ENCODE measurements at regions of chr2 and their contacts with region 1.

Region 1: DNA sequence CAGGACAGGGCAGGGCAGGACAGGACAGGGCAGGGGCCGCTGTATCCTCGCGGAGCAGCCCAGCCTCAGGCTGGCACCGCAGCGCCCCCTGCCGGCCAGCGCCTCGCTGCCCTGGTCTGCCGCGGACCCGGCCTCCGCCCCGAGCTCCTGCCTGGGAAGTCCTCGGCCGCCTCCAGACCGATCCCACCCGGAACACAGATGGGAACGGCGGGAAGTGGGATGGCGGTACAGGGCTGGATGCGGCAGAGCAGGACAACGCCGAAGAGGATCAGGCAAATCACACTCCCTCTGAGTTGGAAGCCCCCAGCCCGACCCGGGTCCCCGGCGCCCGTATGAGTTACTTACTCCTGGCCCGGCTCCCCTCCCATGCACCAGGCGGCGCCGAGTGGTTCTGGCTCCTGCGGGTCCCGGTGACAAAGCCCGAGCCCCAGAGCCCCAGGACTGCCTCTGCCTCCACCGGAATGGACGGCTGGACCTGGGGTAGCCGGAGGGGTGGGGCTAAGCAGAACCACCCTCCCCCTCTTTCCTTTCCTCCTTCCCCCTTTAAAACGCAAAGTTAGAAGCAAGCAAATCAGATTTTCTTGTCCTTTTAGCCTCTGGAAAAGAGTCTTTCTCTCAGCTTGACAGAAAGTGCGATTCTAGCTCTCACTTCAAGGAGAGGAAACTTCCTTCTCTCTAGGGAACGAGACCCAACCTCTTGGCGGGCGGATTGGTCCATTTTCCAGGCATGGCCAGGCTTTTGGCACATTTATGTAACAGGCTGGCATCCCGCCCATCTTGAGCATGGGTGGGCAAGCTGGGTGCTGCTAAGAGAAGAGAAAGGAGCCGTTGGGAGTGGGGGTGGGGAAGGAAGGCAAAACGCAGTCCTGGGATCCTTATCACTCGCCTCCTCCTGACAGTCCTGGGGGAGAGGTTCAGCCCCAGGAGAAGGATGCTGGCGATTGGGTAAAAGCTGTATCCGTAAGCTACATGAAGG is at the start of gene TP53I3:
- DNase-seq: peak; percentile 71 to 90
- ATAC-seq: peak; percentile 93 to 95
- H3K4me3 ChIP-seq: peak within 1 kb of the TSS; percentile 50 to 68 (median 62)
- H3K27ac ChIP-seq: peak within 1 kb of the TSS; percentile 67 to 82 (median 74)
- H3K4me1 ChIP-seq: peaks cover 8 to 12% of the 10 kb centered on the region in 2 donors
- H3K27me3 ChIP-seq: no peaks in the 10 kb centered on the region
- CTCF ChIP-seq: peak; percentile 92 to 98 (median 97)
- POLR2A ChIP-seq: peak; percentile 47 to 72
- total RNA-seq, gene TP53I3: 3.3 to 7.6 (median 4.9) TPM

Region 2: GRCh38 chr2:23824777-23825212 is 259.9 kb before region 1 on chr2:
- in situ Hi-C with region 1: loop called (anchors 10 to 25 kb)
- intact Hi-C with region 1: loop called (anchors 2 kb)
- DNase-seq: no peak
- ATAC-seq: peak in 1 of 2 donors; percentile 60
- H3K4me3 ChIP-seq: no peak overlapping the region
- H3K27ac ChIP-seq: no peak overlapping the region
- H3K4me1 ChIP-seq: peaks cover 0 to 5% of the 10 kb centered on the region in 2 donors
- H3K27me3 ChIP-seq: no peaks in the 10 kb centered on the region
- CTCF ChIP-seq: peak; percentile 36 to 67 (median 58)
- POLR2A ChIP-seq: no peak

Region 3: DNA sequence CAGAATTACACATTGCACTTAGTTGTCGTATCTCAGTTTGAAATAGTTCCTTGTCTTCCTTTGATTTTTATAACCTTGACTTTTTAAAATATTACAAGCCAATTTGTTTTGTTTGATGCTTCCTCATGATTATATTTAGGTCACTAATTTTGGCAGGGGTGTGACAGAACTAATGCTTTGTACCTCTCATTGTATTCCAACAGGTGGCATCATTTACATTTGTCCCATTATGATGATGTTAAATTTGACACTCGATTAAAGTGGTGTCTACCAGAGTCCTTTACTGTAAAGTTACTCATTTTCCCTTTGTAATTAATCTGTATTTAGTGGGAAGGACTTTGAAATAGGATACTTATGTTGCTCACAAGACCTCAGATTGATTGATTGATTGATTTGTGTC is 96.3 kb before region 1 on chr2:
- in situ Hi-C with region 1: no loop called
- intact Hi-C with region 1: loop called (anchors 2 kb)
- DNase-seq: no peak
- ATAC-seq: no peak
- H3K4me3 ChIP-seq: no peak overlapping the region
- H3K27ac ChIP-seq: no peak overlapping the region
- H3K4me1 ChIP-seq: no peaks in the 10 kb centered on the region
- H3K27me3 ChIP-seq: no peaks in the 10 kb centered on the region
- CTCF ChIP-seq: peak in 2 of 5 experiments; percentile 19 to 23
- POLR2A ChIP-seq: no peak

Region 4: GRCh38 chr2:24046930-24047702 is 37.6 kb before region 1 on chr2 and contains the start of gene WDCP:
- in situ Hi-C with region 1: no loop called
- intact Hi-C with region 1: loop called (anchors 2 kb)
- DNase-seq: peak; percentile 97
- ATAC-seq: peak; percentile 100
- H3K4me3 ChIP-seq: peak within 1 kb of the TSS; percentile 68 to 98 (median 90)
- H3K27ac ChIP-seq: peak within 1 kb of the TSS; percentile 79 to 85 (median 82)
- H3K4me1 ChIP-seq: peaks cover 19 to 27% of the 10 kb centered on the region in 2 donors
- H3K27me3 ChIP-seq: peaks cover 8 to 21% (median 18%) of the 10 kb centered on the region in 3 donors
- CTCF ChIP-seq: no peak
- POLR2A ChIP-seq: peak; percentile 47 to 80
- total RNA-seq, gene WDCP: 4.8 to 8.4 (median 8.3) TPM

Region 5: DNA sequence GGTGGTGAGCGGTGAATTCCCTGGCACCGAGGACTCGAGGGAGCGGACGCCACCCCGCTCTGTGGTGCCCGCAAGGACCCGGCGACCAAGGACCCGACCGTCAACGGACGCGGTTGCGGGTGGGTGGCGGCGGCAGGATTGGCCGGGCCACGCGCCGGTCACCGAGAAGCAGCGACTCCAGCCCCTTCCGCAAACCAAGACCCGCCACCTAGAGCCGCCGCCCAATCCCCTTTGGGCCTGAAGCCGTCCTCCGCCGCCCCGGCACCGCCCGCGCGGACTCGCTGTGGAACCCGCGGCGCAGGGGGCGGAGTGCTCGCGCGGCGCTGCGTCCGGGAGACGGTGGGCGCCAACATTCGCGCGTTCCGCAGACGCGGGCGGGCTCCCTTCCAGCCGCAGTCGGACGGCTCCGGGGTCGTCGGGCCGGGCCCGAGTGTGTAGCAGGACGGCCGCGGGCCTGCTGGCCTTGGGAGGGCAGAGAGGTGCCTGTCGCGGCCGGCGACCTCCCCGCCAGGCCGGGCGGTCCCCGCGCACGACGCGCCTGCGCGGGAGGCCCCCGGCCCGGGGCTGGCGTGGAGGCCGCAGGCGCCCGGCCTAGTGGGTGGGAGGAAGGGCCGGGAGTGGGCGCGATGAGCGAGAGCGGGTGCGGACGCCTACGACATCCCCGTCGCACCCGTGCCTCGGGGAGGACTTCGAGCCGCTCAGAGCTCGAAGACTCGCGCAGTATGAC is 38.7 kb after region 1 on chr2 and contains the starts of genes FAM228B and PFN4:
- in situ Hi-C with region 1: no loop called
- intact Hi-C with region 1: loop called (anchors 2 kb)
- DNase-seq: peak; percentile 85 to 88
- ATAC-seq: peak; percentile 93
- H3K4me3 ChIP-seq: peak within 1 kb of the TSS; percentile 80 to 94 (median 84)
- H3K27ac ChIP-seq: peak within 1 kb of the TSS; percentile 86 to 93 (median 91)
- H3K4me1 ChIP-seq: peaks cover 11 to 17% of the 10 kb centered on the region in 2 donors
- H3K27me3 ChIP-seq: no peaks in the 10 kb centered on the region
- CTCF ChIP-seq: no peak
- POLR2A ChIP-seq: peak; percentile 84 to 88
- total RNA-seq, gene FAM228B: 3.0 to 6.7 (median 4.3) TPM
- total RNA-seq, gene PFN4: not detected

Measured in gastrocnemius medialis (tissue), 4 donors.